HEK293T (cell line): ENCODE measurements at regions of chr20 and their contacts with region 1.

Region 1: GRCh38 chr20:45812157-45813020 is at the start of gene UBE2C:
- DNase-seq: peak; percentile 97

Region 2: DNA sequence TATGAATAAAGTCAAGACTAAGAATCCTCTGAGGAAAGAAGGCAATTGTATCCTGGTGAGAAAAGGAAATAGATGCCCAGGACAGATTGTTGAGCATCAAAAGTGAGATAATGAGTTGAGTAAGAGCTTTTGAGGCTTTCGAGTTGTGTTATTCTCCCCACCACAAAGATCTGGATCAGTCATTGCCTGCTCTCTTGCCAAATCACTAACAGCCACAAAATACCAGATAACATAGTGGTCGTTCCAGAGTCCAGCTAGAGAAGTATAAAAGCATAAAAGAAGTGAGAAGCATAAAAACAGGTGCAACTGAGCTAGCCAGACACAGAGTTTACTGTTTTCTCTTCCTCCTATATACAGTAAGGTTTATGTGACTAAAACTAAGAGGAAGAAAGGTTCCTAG is 85.3 kb before region 1 on chr20:
- CTCF ChIA-PET with region 1: no interaction called
- POLR2A ChIA-PET with region 1: no interaction called
- DNase-seq: no peak

Region 3: DNA sequence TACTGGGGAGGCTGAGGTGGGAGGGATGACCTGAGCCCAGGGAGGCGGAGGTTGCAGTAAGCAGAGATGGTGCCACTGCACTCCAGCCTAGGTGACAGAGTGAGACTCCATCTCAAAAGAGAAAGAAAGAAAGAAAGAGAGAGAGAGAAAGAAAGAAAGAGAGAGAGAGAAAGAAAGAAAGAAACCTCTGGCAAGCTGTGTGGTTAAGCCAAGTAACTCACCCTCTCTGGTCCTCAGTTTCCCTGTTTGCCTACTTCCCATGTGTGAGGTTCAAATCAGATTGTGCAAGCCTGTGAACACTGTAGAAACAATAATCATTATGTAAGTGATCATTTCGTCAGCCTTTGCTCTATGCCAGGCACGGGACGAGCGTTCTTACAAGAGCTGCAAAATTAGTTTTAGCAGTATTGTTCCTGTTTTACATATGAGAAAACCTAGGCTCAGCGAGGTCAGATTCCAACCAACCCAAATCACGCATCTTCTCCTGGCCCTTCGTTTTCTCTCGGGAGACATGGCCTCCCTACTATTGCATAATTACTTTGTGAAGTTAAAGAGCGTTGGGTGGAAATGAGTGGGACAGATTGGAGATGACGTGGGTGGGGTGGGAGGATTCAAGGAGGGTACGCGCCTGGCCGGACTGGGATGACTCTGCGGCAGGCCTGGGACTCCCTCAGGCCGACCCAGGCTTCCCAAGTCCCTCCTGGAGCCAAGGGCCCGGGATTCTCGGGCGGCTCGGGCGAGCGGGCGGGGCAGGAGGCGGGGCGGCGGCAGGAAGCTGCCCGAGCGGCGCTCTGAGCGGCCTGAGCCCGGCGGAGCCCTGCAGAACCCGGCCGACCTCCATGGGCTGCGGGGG is 20.9 kb after region 1 on chr20 and contains the start of gene SNX21:
- CTCF ChIA-PET with region 1: no interaction called
- POLR2A ChIA-PET with region 1: interaction called, 10 read pairs
- DNase-seq: peak; percentile 74